AG04450 (cell line): ENCODE measurements at regions of chr5 and their contacts with region 1.

Region 1: DNA sequence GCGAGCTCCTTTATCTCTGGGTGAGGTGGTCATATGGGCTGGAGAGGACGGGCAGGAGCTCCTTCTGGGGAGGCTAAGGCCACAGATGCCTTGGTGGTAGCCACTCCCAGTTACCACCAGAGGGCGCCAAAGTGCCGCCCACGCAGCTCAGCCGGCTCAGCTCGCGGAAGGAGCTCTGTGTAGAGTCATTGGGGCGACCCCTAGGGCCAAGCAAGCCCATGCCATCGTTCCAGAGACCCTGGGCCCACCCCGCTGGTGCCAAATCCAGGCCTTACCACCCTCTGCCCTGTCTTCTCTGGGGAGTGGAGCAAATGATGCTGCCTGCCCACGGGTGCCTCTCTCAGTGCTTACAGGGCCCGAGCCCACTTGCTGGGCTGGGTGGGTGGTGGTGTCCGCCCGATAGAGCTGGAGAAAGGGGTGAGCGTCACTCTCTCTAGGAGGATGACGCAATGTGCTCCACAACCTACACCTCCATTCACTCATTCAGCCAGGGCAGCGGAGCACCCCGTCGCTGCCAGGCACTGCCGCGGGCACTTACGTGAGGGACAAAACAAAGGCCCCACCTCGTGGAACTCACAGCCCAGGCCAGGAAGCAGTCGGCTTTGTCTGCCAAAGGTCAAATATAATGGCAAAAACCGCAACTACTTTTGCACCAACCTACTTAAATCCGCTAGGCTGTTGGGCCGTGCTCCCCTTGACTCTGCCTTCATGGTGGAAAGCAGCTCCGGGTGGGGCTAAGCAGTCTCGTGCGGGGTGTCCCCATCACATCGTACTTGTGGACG is 13.8 kb downstream of the TSPAN17 start:
- DNase-seq: peak; percentile 26
- H3K4me3 ChIP-seq: no peak overlapping the region
- H3K27ac ChIP-seq: no peak overlapping the region
- H3K27me3 ChIP-seq: peaks cover 21% of the 10 kb centered on the region
- CTCF ChIP-seq: peak; percentile 95

Region 2: DNA sequence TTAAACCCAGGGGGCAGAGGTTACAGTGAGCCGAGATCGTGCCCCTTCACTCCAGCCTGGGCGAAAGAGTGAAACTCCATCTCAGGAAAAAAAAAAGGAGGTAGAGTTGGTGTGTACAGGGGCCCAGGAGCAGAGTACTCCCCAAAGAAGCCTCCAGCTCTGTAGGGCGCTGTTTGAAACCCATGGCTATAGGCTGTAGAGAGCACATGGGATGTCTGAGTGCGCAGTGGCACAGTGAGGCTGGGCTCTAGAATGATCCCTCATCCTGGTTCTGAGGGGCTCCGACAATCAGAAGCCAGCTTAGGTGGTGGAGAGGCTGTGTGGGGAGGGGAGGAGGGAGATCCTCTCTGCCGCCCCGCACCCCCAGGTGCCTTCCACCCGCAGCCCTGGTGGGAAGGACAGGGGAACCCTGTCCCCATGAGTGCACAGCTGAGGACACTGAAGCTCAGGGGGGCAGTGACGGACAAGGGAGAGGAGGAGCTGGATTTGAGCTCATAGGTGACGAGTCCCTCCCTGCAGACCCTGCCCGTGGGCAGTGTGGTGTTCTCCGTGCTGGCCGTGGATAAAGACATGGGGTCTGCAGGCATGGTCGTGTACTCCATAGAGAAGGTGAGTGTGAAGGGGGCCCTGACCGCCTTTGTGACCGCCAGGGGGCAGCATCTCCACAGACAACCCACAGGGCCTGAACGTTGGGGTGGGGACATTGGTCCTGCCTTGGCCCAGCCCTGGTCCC is 87.3 kb before region 1 on chr5:
- CTCF ChIA-PET with region 1: interaction called, 29 read pairs
- POLR2A ChIA-PET with region 1: no interaction called
- DNase-seq: peak; percentile 8
- H3K4me3 ChIP-seq: no peak overlapping the region
- H3K27ac ChIP-seq: no peak overlapping the region
- H3K27me3 ChIP-seq: peaks cover 4% of the 10 kb centered on the region
- CTCF ChIP-seq: peak; percentile 82

Region 3: DNA sequence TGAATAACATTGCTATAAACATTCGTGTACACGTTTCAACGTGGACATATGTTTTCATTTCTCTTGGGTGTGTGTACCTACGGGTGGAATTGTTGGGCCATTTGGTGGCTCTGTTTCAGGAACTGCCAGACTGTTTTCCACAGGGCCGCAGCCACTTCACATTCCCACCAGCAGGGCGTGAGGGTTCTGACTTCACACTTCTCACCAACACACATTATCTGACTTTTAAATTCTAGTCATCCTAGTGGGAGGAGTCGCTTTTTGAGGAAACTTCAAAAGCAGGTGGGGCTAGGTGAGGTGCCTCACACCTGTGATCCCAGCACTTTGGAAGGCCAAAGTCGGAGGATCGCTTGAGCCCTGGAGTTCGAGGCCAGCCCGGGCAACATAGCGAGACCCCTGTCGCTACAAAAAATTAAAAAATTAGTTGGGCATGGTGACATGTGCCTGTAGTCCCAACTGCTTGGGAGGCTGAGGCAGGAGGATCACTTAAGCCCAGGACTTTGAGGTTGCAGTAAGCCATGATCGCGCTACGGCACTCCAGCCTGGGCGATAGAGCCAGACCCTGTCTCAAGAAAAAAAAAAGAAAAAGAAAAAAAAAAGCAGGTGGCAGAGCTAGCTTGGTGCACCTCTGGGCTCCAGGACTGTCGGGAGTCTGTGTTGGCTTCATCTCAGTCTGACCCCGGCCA is 14.8 kb after region 1 on chr5:
- CTCF ChIA-PET with region 1: interaction called, 33 read pairs
- POLR2A ChIA-PET with region 1: interaction called, 3 read pairs
- DNase-seq: no peak
- H3K4me3 ChIP-seq: no peak overlapping the region
- H3K27ac ChIP-seq: no peak overlapping the region
- H3K27me3 ChIP-seq: peaks cover 42% of the 10 kb centered on the region
- CTCF ChIP-seq: peak; percentile 63

Region 4: GRCh38 chr5:176916337-176916736 is 255.3 kb after region 1 on chr5:
- CTCF ChIA-PET with region 1: interaction called, 21 read pairs
- POLR2A ChIA-PET with region 1: no interaction called
- DNase-seq: no peak
- H3K4me3 ChIP-seq: no peak overlapping the region
- H3K27ac ChIP-seq: no peak overlapping the region
- H3K27me3 ChIP-seq: no peaks in the 10 kb centered on the region
- CTCF ChIP-seq: no peak

Region 5: DNA sequence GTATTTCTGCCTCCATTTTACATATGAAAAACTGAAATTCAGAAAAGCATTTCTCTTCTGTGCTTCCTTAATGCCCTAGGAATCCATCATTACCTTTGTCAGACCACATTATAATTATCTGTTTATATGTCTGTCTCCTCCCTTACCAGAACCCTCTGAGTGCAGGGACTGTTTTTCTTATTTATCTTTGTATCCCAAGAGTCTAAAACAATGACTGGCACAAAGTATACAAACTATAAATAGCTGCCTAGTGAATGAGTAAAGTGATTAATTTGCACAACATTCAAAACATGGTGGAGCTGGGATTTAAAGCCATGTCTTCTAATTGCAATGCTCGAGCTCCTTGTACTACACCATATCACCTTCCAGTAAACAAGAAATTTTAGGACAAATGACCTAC is 287.4 kb after region 1 on chr5:
- CTCF ChIA-PET with region 1: interaction called, 17 read pairs
- POLR2A ChIA-PET with region 1: no interaction called
- DNase-seq: no peak
- H3K4me3 ChIP-seq: no peak overlapping the region
- H3K27ac ChIP-seq: no peak overlapping the region
- H3K27me3 ChIP-seq: no peaks in the 10 kb centered on the region
- CTCF ChIP-seq: no peak

Region 6: DNA sequence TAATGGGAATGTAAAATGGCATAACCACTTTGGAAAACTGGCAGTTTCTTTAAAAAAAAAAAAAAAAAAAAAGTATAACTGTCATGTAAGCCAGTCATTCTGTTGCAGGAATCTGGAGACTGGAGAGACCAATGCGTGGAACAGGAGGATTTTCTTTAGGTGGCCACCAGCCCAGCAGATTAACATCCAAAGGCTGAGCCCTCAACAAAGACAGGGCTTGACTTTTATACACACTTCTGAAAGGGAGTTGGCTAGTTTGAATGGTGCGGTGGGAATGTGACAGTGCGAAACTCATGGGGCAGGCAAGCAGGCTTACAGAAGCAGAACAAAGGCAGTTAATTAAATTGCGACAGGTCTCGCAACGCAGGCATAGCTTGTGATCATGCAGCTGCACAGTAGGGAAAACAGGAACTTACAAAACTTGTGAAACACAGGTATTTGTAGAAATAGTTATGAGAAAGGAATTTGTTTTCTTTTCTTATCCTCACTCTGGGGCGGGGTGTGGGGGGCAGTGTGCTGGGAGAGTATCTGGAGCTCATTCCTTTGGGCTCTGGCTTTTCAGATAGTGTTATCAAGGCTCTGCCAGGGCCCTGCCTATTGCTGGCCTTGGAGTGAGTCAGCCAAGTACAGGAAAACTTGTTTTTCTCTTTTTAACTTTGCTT is 333.5 kb after region 1 on chr5:
- CTCF ChIA-PET with region 1: interaction called, 13 read pairs
- POLR2A ChIA-PET with region 1: no interaction called
- DNase-seq: no peak
- H3K4me3 ChIP-seq: no peak overlapping the region
- H3K27ac ChIP-seq: no peak overlapping the region
- H3K27me3 ChIP-seq: no peaks in the 10 kb centered on the region
- CTCF ChIP-seq: no peak